ENCODE measurements at regions of chr22 and their contacts with region 1.

Region 1: GRCh38 chr22:42169055-42169469 is 38.5 kb upstream of the CYP2D6 start:
- DNase-seq: peak; percentile 81
- H3K4me3 ChIP-seq: no peak overlapping the region
- H3K27ac ChIP-seq: no peak overlapping the region
- H3K4me1 ChIP-seq: peaks cover 25% of the 10 kb centered on the region
- CTCF ChIP-seq: peak; percentile 100

Region 2: DNA sequence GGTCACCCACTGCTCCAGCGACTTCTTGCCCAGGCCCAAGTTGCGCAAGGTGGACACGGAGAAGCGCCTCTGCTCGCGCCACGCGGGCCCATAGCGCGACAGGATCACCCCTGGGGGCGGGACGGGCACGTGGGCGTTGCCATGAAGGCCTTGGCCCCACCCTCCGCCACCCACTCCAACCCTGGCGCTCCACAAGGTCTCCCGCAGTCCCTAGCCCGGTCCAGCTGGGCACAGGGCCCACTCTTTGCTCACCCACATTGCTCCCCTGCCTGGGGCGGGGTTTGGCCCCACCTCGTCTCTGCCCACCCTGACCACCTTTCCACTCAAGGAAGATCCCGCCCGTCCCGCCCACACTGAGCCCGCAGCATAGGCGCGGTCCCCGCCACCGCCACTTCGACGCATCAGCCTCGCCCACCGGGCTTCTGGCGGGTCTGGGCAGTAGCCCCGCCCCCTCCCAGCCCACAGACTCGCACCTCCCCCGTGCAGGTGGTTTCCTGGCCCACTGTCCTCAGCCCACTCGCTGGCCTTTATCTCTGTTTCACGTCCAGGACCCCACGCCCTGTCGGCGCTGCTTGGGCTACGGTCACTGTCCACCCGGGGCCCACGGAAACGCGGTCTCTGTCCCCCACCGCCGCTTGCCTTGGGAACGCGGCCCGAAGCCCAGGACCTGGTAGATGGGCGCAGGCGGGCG is 26.1 kb before region 1 on chr22:
- CTCF ChIA-PET with region 1: no interaction called
- POLR2A ChIA-PET with region 1: no interaction called
- intact Hi-C with region 1: no loop called
- DNase-seq: no peak
- H3K4me3 ChIP-seq: no peak overlapping the region
- H3K27ac ChIP-seq: no peak overlapping the region
- H3K4me1 ChIP-seq: no peaks in the 10 kb centered on the region
- CTCF ChIP-seq: no peak

Region 3: GRCh38 chr22:42180349-42180842 is 11.3 kb after region 1 on chr22:
- CTCF ChIA-PET with region 1: no interaction called
- POLR2A ChIA-PET with region 1: no interaction called
- intact Hi-C with region 1: no loop called
- DNase-seq: no peak
- H3K4me3 ChIP-seq: no peak overlapping the region
- H3K27ac ChIP-seq: no peak overlapping the region
- H3K4me1 ChIP-seq: no peaks in the 10 kb centered on the region
- CTCF ChIP-seq: no peak

Region 4: GRCh38 chr22:42269407-42270177 is 100.5 kb after region 1 on chr22:
- CTCF ChIA-PET with region 1: no interaction called
- POLR2A ChIA-PET with region 1: no interaction called
- intact Hi-C with region 1: loop called (anchors 5 kb)
- DNase-seq: peak; percentile 82
- H3K4me3 ChIP-seq: peak overlapping the region; percentile 100
- H3K27ac ChIP-seq: peak overlapping the region; percentile 76
- H3K4me1 ChIP-seq: peaks cover 23% of the 10 kb centered on the region
- CTCF ChIP-seq: peak; percentile 45

Region 5: DNA sequence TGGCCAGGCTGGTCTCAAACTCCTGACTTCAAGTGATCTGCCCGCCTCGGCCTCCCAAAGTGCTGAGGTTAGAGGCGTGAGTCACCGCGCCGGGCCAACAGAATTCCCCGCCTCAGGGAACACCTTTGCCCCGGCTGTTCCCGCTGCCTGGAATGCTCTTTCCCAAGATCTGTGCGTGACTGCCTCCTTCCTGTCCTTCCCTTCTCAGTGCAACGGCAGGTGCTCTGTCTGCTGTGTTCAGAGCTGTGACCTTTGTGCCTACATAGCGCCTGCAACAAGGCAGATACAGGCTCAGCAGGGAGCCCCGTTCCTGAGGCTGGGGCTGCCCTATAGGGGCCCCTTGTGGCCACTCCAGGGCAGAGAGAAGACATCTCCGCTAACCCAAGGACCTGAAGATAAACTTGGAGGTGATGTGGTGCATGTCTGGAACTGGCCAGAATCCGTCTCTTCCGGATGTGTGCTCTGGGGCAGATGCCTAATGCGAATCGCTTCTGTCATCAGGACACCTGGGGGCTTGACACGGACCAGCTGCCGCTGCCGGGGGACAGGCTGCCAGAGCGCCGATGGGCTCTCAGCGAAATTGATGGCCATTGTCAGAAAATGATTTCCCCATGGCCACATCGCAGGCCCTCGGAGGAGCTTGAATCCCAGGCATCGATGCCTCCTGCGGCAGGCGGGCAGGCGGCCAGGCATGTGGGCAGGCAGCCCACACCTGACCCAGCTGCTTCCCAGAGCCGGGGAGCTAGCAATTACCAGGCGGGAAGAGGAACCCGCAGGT is 144.9 kb after region 1 on chr22:
- CTCF ChIA-PET with region 1: no interaction called
- POLR2A ChIA-PET with region 1: no interaction called
- intact Hi-C with region 1: loop called (anchors 1 kb)
- DNase-seq: peak; percentile 61
- H3K4me3 ChIP-seq: no peak overlapping the region
- H3K27ac ChIP-seq: no peak overlapping the region
- H3K4me1 ChIP-seq: peaks cover 16% of the 10 kb centered on the region
- CTCF ChIP-seq: peak; percentile 73

Region 6: GRCh38 chr22:42437488-42438292 is 268.6 kb after region 1 on chr22:
- CTCF ChIA-PET with region 1: no interaction called
- POLR2A ChIA-PET with region 1: no interaction called
- intact Hi-C with region 1: loop called (anchors 1 kb)
- DNase-seq: peak; percentile 86
- H3K4me3 ChIP-seq: peak overlapping the region; percentile 61
- H3K27ac ChIP-seq: peak overlapping the region; percentile 57
- H3K4me1 ChIP-seq: peaks cover 77% of the 10 kb centered on the region
- CTCF ChIP-seq: peak; percentile 97

Measured in OCI-LY7 (cell line).